ENCODE measurements at regions of chr6 and their contacts with region 1.

Region 1: DNA sequence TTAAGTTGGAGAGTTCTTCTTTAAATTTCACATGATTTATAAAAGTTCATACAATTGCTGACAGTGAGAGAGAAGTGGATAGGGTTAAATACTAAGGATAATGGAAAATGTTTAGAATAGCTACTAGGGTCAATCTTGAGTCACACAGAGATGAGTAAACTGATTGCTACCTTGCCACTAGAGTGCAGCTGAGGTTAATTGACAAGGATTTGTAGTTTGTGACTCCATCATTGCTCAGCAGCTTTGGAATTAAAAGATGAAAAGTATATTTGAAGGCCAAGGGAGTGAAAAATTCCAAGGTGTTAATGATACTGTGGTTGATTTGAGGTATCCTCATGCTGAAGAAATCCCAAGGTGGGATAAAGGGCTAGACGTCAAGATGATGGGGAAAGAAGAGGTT is 524.0 kb downstream of the UTRN start:
- DNase-seq: peak; percentile 93
- ATAC-seq: peak; percentile 84
- H3K4me3 ChIP-seq: no peak overlapping the region
- H3K27ac ChIP-seq: peak overlapping the region; percentile 90
- H3K4me1 ChIP-seq: peaks cover 36 to 86% of the 10 kb centered on the region in 2 experiments
- H3K27me3 ChIP-seq: no peaks in the 10 kb centered on the region
- CTCF ChIP-seq: no peak
- POLR2A ChIP-seq: no peak
- RAD21 ChIP-seq: peak; percentile 57

Region 2: DNA sequence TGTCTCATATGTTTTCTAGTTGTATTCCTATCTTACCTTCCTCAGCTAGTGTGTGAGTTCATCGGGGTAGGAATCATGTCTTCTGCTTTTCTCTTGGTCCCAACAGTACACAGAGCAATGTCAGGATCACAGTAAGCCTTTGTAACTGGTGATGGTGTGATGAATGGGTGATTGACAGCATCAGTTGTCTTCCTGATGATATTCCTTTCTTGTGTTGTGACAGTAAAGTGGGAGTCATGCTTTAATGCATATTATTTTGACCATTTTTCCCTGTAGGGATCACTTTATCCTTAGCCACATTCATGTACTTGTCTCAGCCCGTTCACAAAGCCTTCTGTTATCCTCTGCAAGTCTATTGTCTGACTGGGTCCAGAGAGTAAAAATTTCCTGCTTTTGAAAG is 22.3 kb before region 1 on chr6:
- CTCF ChIA-PET with region 1: no interaction called
- POLR2A ChIA-PET with region 1: no interaction called
- RAD21 ChIA-PET with region 1: no interaction called
- intact Hi-C with region 1: no loop called
- DNase-seq: no peak
- ATAC-seq: no peak
- H3K4me3 ChIP-seq: no peak overlapping the region
- H3K27ac ChIP-seq: no peak overlapping the region
- H3K4me1 ChIP-seq: no peaks in the 10 kb centered on the region; a peak in 1 of 4 replicates
- H3K27me3 ChIP-seq: no peaks in the 10 kb centered on the region
- CTCF ChIP-seq: no peak
- POLR2A ChIP-seq: no peak
- RAD21 ChIP-seq: no peak

Region 3: DNA sequence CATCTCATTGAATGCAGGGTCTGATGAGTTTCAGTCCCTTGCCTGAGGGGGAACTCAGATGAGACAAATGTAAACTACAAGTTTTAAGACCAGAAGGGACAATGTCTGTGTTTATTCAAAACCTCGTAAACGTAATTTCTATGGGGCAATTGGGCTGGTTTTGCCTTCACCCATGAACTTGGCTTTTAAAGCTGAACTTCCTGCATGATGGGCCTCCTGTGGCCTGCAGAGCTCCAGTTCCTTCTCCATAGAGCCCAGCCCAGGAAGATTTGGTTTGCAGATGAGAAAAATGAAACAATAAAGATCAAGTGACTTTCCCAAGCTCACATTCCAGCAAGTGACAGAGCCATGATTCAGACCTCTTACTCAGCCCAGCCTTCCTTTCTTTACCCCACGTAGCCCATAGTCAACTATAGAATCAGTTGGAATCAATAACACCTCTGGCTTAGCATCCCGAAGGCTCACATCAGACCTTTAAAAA is 88.4 kb after region 1 on chr6:
- CTCF ChIA-PET with region 1: no interaction called
- POLR2A ChIA-PET with region 1: no interaction called
- RAD21 ChIA-PET with region 1: no interaction called
- intact Hi-C with region 1: loop called (anchors 5 kb)
- DNase-seq: peak; percentile 94
- ATAC-seq: peak; percentile 82
- H3K4me3 ChIP-seq: peak overlapping the region in 1 of 2 experiments; percentile 33; a peak in 1 of 4 replicates
- H3K27ac ChIP-seq: peak overlapping the region; percentile 93
- H3K4me1 ChIP-seq: peaks cover 40 to 76% of the 10 kb centered on the region in 2 experiments
- H3K27me3 ChIP-seq: no peaks in the 10 kb centered on the region
- CTCF ChIP-seq: no peak
- POLR2A ChIP-seq: no peak
- RAD21 ChIP-seq: peak; percentile 48

Region 4: GRCh38 chr6:144912474-144912873 is 103.4 kb after region 1 on chr6:
- CTCF ChIA-PET with region 1: no interaction called
- POLR2A ChIA-PET with region 1: no interaction called
- RAD21 ChIA-PET with region 1: no interaction called
- intact Hi-C with region 1: loop called (anchors 5 kb)
- DNase-seq: no peak
- ATAC-seq: peak; percentile 60
- H3K4me3 ChIP-seq: peak overlapping the region in 1 of 2 experiments; percentile 3; a peak in 1 of 4 replicates
- H3K27ac ChIP-seq: peak overlapping the region; percentile 90
- H3K4me1 ChIP-seq: peaks cover 30 to 77% of the 10 kb centered on the region in 2 experiments
- H3K27me3 ChIP-seq: no peaks in the 10 kb centered on the region
- CTCF ChIP-seq: 0 out of 6 replicates have a peak, but pooled peaks of 1 of the 3 experiments have one; percentile 14
- POLR2A ChIP-seq: no peak
- RAD21 ChIP-seq: no peak